ENCODE measurements at regions of chr11 and their contacts with region 1.

Region 1: DNA sequence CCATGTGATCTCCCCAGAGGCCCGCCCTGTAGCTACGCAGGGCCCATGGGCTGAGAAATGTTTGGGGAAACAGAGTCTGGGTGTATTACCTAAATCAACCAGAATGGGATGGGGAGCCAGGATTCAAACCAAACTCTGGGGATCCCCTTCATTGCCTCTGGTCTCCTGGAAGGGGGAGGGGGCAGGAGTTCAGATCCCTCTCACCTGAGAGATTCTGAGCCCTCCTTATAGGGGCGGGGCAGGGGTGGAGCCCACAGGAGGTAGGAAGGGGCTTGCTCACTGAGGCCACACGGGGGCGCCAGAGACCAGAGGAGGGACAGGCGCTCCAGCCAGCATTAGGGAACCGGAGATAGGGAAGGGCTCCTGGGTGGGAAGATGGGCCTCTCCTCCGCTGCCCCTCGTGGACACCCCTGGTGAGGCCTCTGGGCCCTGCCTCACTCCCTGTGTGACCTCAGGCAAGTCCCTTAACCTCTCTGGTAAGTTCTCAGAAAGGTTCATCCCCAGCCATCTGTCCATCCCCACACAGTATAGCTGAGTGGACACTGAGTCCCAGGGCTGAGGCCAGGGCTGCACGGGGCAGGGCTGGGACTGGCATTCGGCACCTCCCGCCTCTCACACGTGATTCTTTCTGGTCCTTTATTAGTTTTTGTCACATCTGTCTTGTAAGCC is 2.7 kb upstream of the CDC42BPG start:
- DNase-seq: peak; percentile 72 to 96 (median 90)
- ATAC-seq: peak; percentile 56 to 62 (median 59)
- H3K4me3 ChIP-seq: no peak overlapping the region
- H3K4me3 Mint-ChIP-seq: peak overlapping the region in 1 of 3 donors; percentile 26
- H3K27ac ChIP-seq: peak overlapping the region; percentile 38
- H3K27ac Mint-ChIP-seq: peak overlapping the region; percentile 28 to 64
- H3K4me1 ChIP-seq: peaks cover 32 to 76% of the 10 kb centered on the region in 2 experiments
- H3K4me1 Mint-ChIP-seq: peaks cover 60 to 64% (median 63%) of the 10 kb centered on the region in 3 donors
- H3K27me3 ChIP-seq: no peaks in the 10 kb centered on the region
- H3K27me3 Mint-ChIP-seq: no peaks in the 10 kb centered on the region

Region 2: DNA sequence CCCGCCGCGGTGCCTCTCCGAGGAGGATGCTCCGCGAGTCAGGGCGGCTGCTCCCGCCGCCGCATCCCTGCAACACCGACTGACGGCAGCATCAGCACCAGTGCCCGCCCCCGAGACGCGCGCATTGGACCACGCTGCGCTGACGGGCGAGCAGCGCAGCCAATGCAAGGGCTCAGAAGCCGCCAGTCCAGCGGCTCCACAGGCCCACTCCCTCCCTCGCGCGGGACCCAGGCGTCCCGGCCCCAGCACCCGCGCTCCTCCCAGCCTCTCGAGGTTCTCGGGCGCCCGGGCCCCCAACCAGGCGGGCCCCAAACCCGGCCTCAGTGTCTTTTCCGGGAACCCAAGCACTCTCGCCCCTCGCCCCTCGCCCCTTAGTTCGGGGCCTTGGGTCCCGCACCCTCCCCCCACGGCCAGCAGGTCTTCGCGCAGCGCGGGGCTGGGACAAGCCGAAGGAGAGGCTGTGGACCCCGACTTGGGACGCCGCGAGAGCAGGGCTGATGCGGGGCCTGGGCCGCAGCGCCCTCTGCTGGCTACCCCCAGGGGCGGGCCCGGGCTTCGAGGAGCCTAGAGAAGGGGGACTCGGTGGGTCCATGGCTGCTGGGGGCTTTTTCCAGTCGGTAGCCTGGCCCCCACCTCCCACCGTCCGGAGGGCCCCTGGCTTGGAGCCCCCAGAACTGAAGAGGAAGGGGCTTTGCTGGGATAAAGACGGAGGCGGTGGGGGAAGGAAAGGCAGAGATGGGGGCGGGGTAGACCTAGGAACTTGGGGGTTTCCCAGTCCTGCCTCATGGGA is 123.8 kb before region 1 on chr11 and contains the start of gene NRXN2:
- CTCF ChIA-PET with region 1: no interaction called
- POLR2A ChIA-PET with region 1: no interaction called
- DNase-seq: peak; percentile 64 to 92 (median 77)
- ATAC-seq: peak; percentile 94 to 95 (median 94)
- H3K4me3 ChIP-seq: peak within 1 kb of the TSS; percentile 51 to 72
- H3K4me3 Mint-ChIP-seq: peak within 1 kb of the TSS; percentile 52 to 71 (median 56)
- H3K27ac ChIP-seq: peak within 1 kb of the TSS; percentile 58
- H3K27ac Mint-ChIP-seq: peak within 1 kb of the TSS; percentile 30 to 46
- H3K4me1 ChIP-seq: peaks cover 2 to 24% of the 10 kb centered on the region in 2 experiments
- H3K4me1 Mint-ChIP-seq: peaks cover 16 to 22% (median 16%) of the 10 kb centered on the region in 3 donors
- H3K27me3 ChIP-seq: peaks cover 0 to 34% of the 10 kb centered on the region in 2 experiments
- H3K27me3 Mint-ChIP-seq: peaks cover 20 to 38% of the 10 kb centered on the region in 2 donors
- total RNA-seq, gene NRXN2: 0.43 to 0.70 (median 0.47) TPM in 3 of 5 donors, not detected in the others

Region 3: DNA sequence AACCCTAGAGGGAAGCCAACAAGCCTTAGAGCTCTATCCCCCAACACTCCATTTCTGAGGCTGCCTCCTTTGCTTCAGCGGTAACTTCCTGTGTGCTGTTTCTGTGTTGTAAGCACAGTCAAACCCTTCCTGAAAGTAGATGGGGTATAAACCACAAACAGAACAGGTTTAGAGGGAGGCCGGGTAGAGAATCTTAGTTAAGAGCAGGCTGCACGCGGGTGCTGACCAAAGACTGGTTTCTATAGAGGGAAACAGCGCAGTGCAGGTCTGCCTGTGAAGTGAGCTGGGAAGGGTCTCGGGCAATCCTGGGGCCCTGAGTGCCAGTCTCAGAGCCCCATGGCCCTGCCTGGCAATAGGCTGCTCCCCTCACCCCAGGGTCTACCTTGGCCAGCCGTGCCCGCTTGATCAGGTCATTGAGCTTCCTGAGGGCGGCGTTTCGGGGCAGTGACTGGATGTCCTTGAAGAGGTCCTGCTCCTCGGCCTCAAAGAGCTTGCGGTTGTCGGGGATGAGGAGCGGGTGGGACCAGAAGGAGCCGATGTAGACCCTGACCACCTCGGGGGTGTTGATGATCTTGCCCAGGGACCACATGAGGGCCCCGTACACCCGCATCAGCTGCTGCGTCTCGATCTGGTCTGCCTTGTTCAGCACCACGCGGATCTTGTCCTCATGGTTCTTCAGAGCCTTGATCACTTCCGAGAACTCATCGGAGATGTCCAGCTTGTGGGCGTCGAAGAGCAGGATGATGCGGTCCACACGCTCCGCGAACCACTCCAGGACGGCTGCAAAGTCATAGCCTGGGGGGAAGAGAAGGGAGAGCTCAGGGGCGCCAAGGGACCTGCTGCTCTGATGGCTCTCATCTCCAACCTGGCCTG is 12.6 kb after region 1 on chr11:
- CTCF ChIA-PET with region 1: interaction called, 5 to 12 read pairs
- POLR2A ChIA-PET with region 1: interaction called in 1 of 2 experiments, 4 read pairs
- DNase-seq: peak in 29 of 35 experiments; percentile 38 to 86 (median 54)
- ATAC-seq: peak; percentile 78 to 81 (median 78)
- H3K4me3 ChIP-seq: peak overlapping the region; percentile 34 to 35
- H3K4me3 Mint-ChIP-seq: peak overlapping the region; percentile 70 to 82 (median 78)
- H3K27ac ChIP-seq: peak overlapping the region; percentile 93
- H3K27ac Mint-ChIP-seq: peak overlapping the region; percentile 97 to 99
- H3K4me1 ChIP-seq: peaks cover 81 to 100% of the 10 kb centered on the region in 2 experiments
- H3K4me1 Mint-ChIP-seq: peaks cover 86 to 94% (median 90%) of the 10 kb centered on the region in 3 donors
- H3K27me3 ChIP-seq: no peaks in the 10 kb centered on the region
- H3K27me3 Mint-ChIP-seq: no peaks in the 10 kb centered on the region

Region 4: DNA sequence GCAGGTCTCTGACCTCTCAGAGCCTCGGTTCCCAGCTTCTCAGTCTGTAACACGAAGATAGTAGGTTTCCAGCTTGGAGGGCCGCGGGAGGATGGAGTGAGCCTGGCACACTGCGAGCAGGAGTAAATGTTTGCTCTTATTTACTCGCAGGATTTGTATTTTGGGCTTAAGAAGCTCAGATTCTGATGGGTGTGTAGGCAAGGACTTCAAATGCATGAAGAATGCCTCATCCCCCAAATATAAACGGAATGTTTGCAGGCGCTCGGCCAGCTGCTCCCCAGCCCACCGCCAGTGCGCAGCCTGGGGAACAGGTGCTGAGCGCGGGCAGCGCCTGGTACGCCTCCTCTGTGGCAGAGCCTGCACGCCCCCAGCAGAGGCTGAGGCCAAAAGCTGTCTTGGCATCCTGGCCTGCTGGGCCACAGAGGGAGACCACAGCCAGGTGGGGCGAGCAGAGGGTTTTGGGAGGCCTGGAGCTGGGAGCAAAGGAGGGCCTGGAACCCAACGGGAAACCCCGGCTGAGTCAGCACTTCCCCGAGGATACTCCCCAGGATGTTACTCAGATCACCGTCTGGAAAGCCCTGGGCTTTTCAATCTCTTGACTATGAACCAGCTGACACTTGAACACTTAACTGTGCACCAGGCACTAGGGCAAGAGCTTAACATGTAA is 21.9 kb after region 1 on chr11:
- CTCF ChIA-PET with region 1: interaction called in 1 of 2 experiments, 14 read pairs
- POLR2A ChIA-PET with region 1: interaction called in 1 of 2 experiments, 4 read pairs
- DNase-seq: peak in 2 of 35 experiments; percentile 48 to 62
- ATAC-seq: peak; percentile 41 to 58 (median 42)
- H3K4me3 ChIP-seq: peak overlapping the region in 1 of 2 donors; percentile 38
- H3K4me3 Mint-ChIP-seq: peak overlapping the region; percentile 72 to 78 (median 78)
- H3K27ac ChIP-seq: peak overlapping the region; percentile 53
- H3K27ac Mint-ChIP-seq: peak overlapping the region; percentile 95 to 96
- H3K4me1 ChIP-seq: peaks cover 64 to 100% of the 10 kb centered on the region in 2 experiments
- H3K4me1 Mint-ChIP-seq: peaks cover 78 to 91% (median 90%) of the 10 kb centered on the region in 3 donors
- H3K27me3 ChIP-seq: no peaks in the 10 kb centered on the region
- H3K27me3 Mint-ChIP-seq: no peaks in the 10 kb centered on the region

Region 5: GRCh38 chr11:64887757-64888405 is 40.7 kb after region 1 on chr11:
- CTCF ChIA-PET with region 1: interaction called, 11 to 25 read pairs
- POLR2A ChIA-PET with region 1: interaction called in 1 of 2 experiments, 3 read pairs
- DNase-seq: peak; percentile 44 to 91 (median 78)
- ATAC-seq: peak; percentile 84 to 93 (median 87)
- H3K4me3 ChIP-seq: peak overlapping the region; percentile 11 to 23
- H3K4me3 Mint-ChIP-seq: peak overlapping the region; percentile 59 to 76 (median 73)
- H3K27ac ChIP-seq: peak overlapping the region; percentile 24
- H3K27ac Mint-ChIP-seq: peak overlapping the region; percentile 81 to 88
- H3K4me1 ChIP-seq: peaks cover 15 to 37% of the 10 kb centered on the region in 2 experiments
- H3K4me1 Mint-ChIP-seq: peaks cover 24 to 34% (median 33%) of the 10 kb centered on the region in 3 donors
- H3K27me3 ChIP-seq: no peaks in the 10 kb centered on the region
- H3K27me3 Mint-ChIP-seq: no peaks in the 10 kb centered on the region

Region 6: DNA sequence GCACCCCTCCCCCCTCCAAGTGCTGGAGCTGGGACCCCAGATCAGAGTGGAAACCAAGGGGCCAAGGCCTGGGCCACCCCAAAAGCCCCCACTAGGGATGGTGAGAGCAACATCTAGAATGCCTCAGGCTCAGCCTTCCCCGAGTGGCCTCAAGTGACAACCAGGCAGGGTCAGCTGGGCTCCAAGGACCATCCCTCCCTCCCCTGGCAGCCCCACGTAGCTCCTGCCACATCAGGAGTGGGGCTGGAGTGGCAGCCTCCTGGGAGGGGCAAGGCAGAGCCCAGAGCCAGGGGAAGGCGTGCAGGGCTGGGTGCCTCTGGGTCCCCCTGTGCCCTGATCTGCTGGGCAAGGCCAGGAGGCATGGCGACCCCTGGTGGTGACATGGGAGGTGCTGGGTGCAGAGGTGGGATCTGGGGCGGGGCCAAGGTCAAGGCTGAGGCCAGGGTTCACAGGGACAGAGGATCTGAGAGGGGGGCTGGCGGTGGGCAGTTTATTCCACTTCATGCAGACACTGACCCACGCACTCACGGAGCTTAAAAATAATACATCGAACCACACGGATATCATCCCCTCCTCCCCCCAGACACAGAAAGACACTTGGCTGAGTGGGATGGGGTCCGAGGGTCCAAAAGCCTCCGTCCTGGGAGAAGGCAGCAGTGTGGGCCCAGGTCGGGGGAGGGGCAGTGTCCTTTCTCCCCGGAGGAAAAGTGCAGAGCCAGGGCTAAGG is 47.1 kb after region 1 on chr11:
- CTCF ChIA-PET with region 1: interaction called, 7 to 25 read pairs
- POLR2A ChIA-PET with region 1: interaction called, 3 to 8 read pairs
- DNase-seq: peak; percentile 69 to 95 (median 88)
- ATAC-seq: peak; percentile 80 to 96 (median 94)
- H3K4me3 ChIP-seq: no peak overlapping the region
- H3K4me3 Mint-ChIP-seq: no peak overlapping the region
- H3K27ac ChIP-seq: no peak overlapping the region
- H3K27ac Mint-ChIP-seq: peak overlapping the region in 1 of 2 donors; percentile 16
- H3K4me1 ChIP-seq: peaks cover 2 to 9% of the 10 kb centered on the region in 2 experiments
- H3K4me1 Mint-ChIP-seq: peaks cover 0 to 2% (median 2%) of the 10 kb centered on the region in 3 donors
- H3K27me3 ChIP-seq: no peaks in the 10 kb centered on the region
- H3K27me3 Mint-ChIP-seq: no peaks in the 10 kb centered on the region

Region 7: GRCh38 chr11:64976651-64977050 is 129.5 kb after region 1 on chr11:
- CTCF ChIA-PET with region 1: no interaction called
- POLR2A ChIA-PET with region 1: no interaction called
- DNase-seq: no peak
- ATAC-seq: no peak
- H3K4me3 ChIP-seq: no peak overlapping the region
- H3K4me3 Mint-ChIP-seq: no peak overlapping the region
- H3K27ac ChIP-seq: no peak overlapping the region
- H3K27ac Mint-ChIP-seq: no peak overlapping the region
- H3K4me1 ChIP-seq: peaks cover 2 to 10% of the 10 kb centered on the region in 2 experiments
- H3K4me1 Mint-ChIP-seq: peaks cover 0 to 10% (median 5%) of the 10 kb centered on the region in 3 donors
- H3K27me3 ChIP-seq: peaks cover 0 to 12% of the 10 kb centered on the region in 2 experiments
- H3K27me3 Mint-ChIP-seq: peaks cover 5 to 7% of the 10 kb centered on the region in 2 donors

Region 8: GRCh38 chr11:65988791-65989592 is 1141.9 kb after region 1 on chr11:
- CTCF ChIA-PET with region 1: no interaction called
- POLR2A ChIA-PET with region 1: no interaction called
- DNase-seq: peak; percentile 77 to 97 (median 90)
- ATAC-seq: peak; percentile 97 to 100 (median 99)
- H3K4me3 ChIP-seq: no peak overlapping the region
- H3K4me3 Mint-ChIP-seq: no peak overlapping the region
- H3K27ac ChIP-seq: peak overlapping the region; percentile 44
- H3K27ac Mint-ChIP-seq: peak overlapping the region; percentile 74 to 82
- H3K4me1 ChIP-seq: peaks cover 0 to 8% of the 10 kb centered on the region in 2 experiments
- H3K4me1 Mint-ChIP-seq: peaks cover 5 to 7% (median 5%) of the 10 kb centered on the region in 3 donors
- H3K27me3 ChIP-seq: no peaks in the 10 kb centered on the region
- H3K27me3 Mint-ChIP-seq: no peaks in the 10 kb centered on the region